Colonic mucosa (tissue), 4 donors: ENCODE measurements at regions of chr19 and their contacts with region 1.

Region 1: DNA sequence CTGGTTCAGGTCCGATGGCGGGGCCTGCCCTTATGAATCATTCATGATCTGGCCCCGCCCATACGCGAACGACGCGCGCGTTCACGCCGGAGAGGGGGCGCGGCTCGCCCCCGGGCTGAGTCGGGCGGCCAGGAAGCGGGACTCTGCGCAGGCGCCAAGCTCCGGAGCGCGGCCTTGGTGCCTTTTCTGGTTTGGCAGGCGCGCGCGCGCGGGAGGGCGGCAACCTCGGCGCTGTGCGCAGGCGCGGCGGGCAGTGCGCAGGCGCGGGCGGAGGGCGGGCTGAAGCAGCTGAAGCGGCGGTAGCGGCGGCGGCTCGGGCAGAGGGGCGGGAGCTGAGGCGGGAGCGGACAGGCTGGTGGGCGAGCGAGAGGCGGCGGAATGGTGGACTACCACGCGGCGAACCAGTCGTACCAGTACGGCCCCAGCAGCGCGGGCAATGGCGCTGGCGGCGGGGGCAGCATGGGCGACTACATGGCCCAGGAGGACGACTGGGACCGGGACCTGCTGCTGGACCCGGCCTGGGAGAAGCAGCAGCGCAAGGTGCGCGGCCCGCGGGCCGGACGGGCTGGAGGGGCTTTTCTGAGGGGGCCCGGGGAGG is at the start of gene ACTN4:
- DNase-seq: peak; percentile 99
- H3K4me3 ChIP-seq: peak within 1 kb of the TSS; percentile 79
- H3K27ac ChIP-seq: peak within 1 kb of the TSS; percentile 95
- H3K4me1 ChIP-seq: peaks cover 6% of the 10 kb centered on the region
- H3K27me3 ChIP-seq: no peaks in the 10 kb centered on the region
- CTCF ChIP-seq: no peak
- total RNA-seq, gene ACTN4: 1,019 to 1,060 TPM

Region 2: GRCh38 chr19:38683393-38684080 is 36.1 kb after region 1 on chr19:
- intact Hi-C with region 1: loop called (anchors 5 kb)
- DNase-seq: peak; percentile 92
- H3K4me3 ChIP-seq: no peak overlapping the region
- H3K27ac ChIP-seq: peak overlapping the region; percentile 89
- H3K4me1 ChIP-seq: peaks cover 33% of the 10 kb centered on the region
- H3K27me3 ChIP-seq: no peaks in the 10 kb centered on the region
- CTCF ChIP-seq: no peak